Mammary epithelial cell (primary cell): ENCODE measurements at regions of chr2 and their contacts with region 1.

Region 1: DNA sequence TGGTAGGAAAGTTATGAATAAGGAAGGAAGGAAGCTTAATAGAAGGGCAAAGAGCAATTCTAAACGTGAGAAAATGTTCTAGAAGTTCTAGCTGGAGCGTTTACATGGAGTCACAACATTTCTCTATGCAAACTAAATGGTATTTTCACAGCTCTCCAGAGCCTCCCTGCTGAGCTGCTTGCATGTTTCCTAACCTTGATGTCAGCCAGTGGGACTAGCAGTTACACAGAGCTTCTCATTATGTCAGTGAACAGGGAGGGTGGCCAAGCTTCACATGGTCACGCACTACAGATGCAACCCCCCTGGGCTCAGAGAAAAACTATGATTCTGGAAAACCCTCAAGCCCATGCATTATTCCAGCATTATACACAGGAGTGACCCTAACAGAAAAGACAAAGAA is 153.4 kb upstream of the CCDC150 start:
- DNase-seq: no peak
- H3K4me3 ChIP-seq: no peak overlapping the region
- H3K27ac ChIP-seq: no peak overlapping the region
- H3K4me1 ChIP-seq: no peaks in the 10 kb centered on the region
- H3K27me3 ChIP-seq: no peaks in the 10 kb centered on the region
- CTCF ChIP-seq: no peak

Region 2: GRCh38 chr2:196421880-196422279 is 64.3 kb before region 1 on chr2:
- CTCF ChIA-PET with region 1: no interaction called
- dilution Hi-C with region 1: no loop called
- in situ Hi-C with region 1: no loop called
- intact Hi-C with region 1: no loop called
- DNase-seq: no peak
- H3K4me3 ChIP-seq: no peak overlapping the region
- H3K27ac ChIP-seq: no peak overlapping the region
- H3K4me1 ChIP-seq: no peaks in the 10 kb centered on the region
- H3K27me3 ChIP-seq: no peaks in the 10 kb centered on the region
- CTCF ChIP-seq: no peak

Region 3: DNA sequence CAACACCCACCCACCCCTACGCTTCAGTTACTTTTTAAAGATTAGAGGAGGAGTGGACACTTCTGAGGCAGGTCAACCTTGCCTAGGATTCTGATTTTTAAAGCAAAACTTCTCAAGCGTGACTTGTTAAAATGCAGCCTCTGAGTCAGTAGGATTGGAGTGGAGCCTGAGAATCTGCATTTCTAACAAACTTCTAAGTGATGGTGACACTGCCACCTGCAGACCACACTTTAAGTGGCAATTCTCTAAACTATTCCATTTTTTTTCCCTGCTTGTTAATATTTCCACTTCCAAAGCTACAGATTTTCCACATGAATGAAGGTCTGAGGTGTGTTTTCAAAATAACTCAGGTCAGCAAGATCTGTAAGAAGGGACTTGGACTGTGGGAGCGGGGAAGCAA is 17.8 kb before region 1 on chr2:
- CTCF ChIA-PET with region 1: no interaction called
- dilution Hi-C with region 1: no loop called
- in situ Hi-C with region 1: no loop called
- intact Hi-C with region 1: no loop called
- DNase-seq: no peak
- H3K4me3 ChIP-seq: no peak overlapping the region
- H3K27ac ChIP-seq: no peak overlapping the region
- H3K4me1 ChIP-seq: no peaks in the 10 kb centered on the region
- H3K27me3 ChIP-seq: no peaks in the 10 kb centered on the region
- CTCF ChIP-seq: no peak

Region 4: DNA sequence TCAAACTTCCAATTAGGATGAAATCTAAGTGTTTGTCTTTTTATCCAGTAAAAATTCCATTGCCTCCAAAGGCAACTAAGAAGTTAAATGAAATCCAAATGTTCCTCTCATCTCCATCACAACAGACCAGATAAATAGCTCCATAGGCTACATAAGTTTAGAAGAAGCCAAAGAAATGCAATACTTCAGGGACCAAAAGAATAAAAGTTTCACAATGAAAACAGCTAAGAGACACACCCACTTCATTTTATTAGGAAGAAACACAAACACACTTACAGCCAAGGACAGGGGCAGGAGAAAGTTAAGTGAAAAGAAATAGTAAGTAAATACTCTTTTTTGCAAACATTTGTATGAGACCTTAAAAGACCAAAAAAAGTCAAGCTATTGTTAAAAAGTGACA is 64.9 kb after region 1 on chr2:
- CTCF ChIA-PET with region 1: no interaction called
- dilution Hi-C with region 1: loop called (anchors 5 kb)
- in situ Hi-C with region 1: no loop called
- intact Hi-C with region 1: no loop called
- DNase-seq: no peak
- H3K4me3 ChIP-seq: no peak overlapping the region
- H3K27ac ChIP-seq: no peak overlapping the region
- H3K4me1 ChIP-seq: no peaks in the 10 kb centered on the region
- H3K27me3 ChIP-seq: no peaks in the 10 kb centered on the region
- CTCF ChIP-seq: no peak